ENCODE measurements at regions of chr2 and their contacts with region 1.

Region 1: GRCh38 chr2:85354286-85355072 is at the starts of genes ELMOD3 and RETSAT:
- DNase-seq: peak; percentile 98 to 99 (median 99)
- H3K4me3 ChIP-seq: peak within 1 kb of the TSS; percentile 64 to 81
- H3K4me3 Mint-ChIP-seq: peak within 1 kb of the TSS; percentile 97 to 100 (median 99)
- H3K27ac ChIP-seq: peak within 1 kb of the TSS; percentile 94
- H3K27ac Mint-ChIP-seq: peak within 1 kb of the TSS; percentile 94 to 100 (median 99)
- H3K4me1 ChIP-seq: peaks cover 44% of the 10 kb centered on the region
- H3K4me1 Mint-ChIP-seq: peaks cover 28 to 74% (median 57%) of the 10 kb centered on the region in 4 donors
- H3K27me3 ChIP-seq: no peaks in the 10 kb centered on the region
- H3K27me3 Mint-ChIP-seq: no peaks in the 10 kb centered on the region
- total RNA-seq, gene ELMOD3: 29.8 to 33.2 TPM
- total RNA-seq, gene RETSAT: 33.0 to 33.4 TPM

Region 2: GRCh38 chr2:85213901-85214512 is 140.5 kb before region 1 on chr2:
- CTCF ChIA-PET with region 1: no interaction called
- POLR2A ChIA-PET with region 1: no interaction called
- intact Hi-C with region 1: no loop called
- DNase-seq: no peak
- H3K4me3 ChIP-seq: no peak overlapping the region
- H3K4me3 Mint-ChIP-seq: no peak overlapping the region
- H3K27ac ChIP-seq: no peak overlapping the region
- H3K27ac Mint-ChIP-seq: no peak overlapping the region
- H3K4me1 ChIP-seq: no peaks in the 10 kb centered on the region
- H3K4me1 Mint-ChIP-seq: no peaks in the 10 kb centered on the region
- H3K27me3 ChIP-seq: no peaks in the 10 kb centered on the region
- H3K27me3 Mint-ChIP-seq: peaks cover 17 to 47% of the 10 kb centered on the region in 2 donors

Region 3: DNA sequence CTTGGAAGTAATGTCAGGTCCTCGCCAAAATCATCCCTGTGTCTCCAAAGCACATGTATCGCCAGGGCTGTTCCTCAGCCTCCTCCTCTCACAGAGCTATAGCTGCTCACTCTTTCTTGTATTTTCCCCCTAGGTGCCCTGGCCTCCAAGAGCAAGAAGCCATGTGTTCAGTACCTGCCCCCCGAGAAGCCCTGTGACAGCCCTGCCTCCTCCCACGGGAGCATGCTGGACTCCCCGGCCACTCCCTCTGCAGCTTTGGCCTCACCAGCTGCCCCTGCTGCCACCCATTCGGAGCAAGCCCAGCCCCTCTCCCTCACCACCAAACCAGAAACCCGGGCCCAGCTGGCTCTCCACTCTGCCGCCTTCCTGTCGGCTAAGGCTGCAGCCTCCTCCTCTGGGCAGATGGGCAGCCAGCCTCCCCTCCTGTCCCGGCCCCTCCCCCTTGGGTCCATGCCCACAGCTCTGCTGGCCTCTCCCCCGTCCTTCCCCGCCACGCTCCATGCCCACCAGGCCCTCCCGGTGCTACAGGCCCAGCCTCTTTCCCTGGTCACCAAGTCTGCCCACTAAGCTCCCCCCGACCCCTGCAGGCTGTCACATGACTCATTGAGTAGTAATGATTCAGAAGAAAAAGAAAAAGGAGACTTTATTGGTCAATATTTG is 45.5 kb before region 1 on chr2:
- CTCF ChIA-PET with region 1: no interaction called
- POLR2A ChIA-PET with region 1: interaction called, 16 read pairs
- intact Hi-C with region 1: loop called (anchors 5 kb)
- DNase-seq: peak in 1 of 5 donors; percentile 41
- H3K4me3 ChIP-seq: peak overlapping the region in 1 of 2 donors; percentile 14
- H3K4me3 Mint-ChIP-seq: peak overlapping the region; percentile 80 to 95 (median 87)
- H3K27ac ChIP-seq: peak overlapping the region; percentile 46
- H3K27ac Mint-ChIP-seq: peak overlapping the region; percentile 73 to 97 (median 97)
- H3K4me1 ChIP-seq: peaks cover 36% of the 10 kb centered on the region
- H3K4me1 Mint-ChIP-seq: peaks cover 19 to 48% (median 39%) of the 10 kb centered on the region in 4 donors
- H3K27me3 ChIP-seq: no peaks in the 10 kb centered on the region
- H3K27me3 Mint-ChIP-seq: peaks cover 0 to 2% of the 10 kb centered on the region in 2 donors

Region 4: DNA sequence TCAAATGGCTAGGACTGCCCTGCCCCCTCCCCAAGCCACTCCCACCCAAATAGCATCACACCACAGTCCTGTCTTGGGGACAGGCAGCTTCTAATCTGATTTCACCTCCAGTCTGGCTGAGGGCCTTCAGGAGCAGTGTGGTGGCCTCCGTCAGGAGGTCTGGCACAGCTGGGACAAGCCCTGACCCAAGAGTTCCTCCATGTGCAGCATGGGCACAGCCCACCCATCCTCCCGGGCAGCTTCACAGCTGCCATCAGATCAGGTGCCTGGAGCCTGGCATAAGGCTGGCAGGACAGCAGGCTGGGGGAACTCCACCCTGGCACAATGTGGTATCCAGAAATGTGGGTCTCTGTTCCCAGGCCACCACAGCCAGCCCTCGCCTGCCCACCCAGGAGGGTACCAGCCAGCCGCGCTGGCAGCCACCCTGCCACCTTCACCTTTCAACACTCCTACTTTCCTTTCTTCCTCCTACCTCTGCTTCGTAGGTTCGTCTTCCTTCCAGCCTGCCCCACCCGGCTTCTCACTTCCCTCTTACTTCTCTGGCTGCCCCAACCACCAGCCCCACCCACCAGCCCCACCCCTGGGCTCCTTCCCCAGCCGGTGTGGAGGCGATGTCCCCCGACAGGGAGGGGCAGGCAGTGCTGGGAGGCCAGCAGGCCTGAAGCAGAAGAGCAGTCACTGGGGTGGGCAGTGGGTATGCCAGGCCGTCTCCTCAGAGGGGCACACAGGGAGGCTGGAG is 55.5 kb after region 1 on chr2 and contains the start of gene CAPG:
- CTCF ChIA-PET with region 1: no interaction called
- POLR2A ChIA-PET with region 1: interaction called, 7 read pairs
- intact Hi-C with region 1: loop called (anchors 2 kb)
- DNase-seq: peak in 2 of 5 donors; percentile 25 to 34
- H3K4me3 ChIP-seq: peak within 1 kb of the TSS; percentile 47 to 58
- H3K4me3 Mint-ChIP-seq: peak within 1 kb of the TSS; percentile 86 to 90 (median 88)
- H3K27ac ChIP-seq: peak within 1 kb of the TSS; percentile 55
- H3K27ac Mint-ChIP-seq: peak within 1 kb of the TSS; percentile 54 to 92 (median 85)
- H3K4me1 ChIP-seq: peaks cover 62% of the 10 kb centered on the region
- H3K4me1 Mint-ChIP-seq: peaks cover 36 to 52% (median 44%) of the 10 kb centered on the region in 4 donors
- H3K27me3 ChIP-seq: no peaks in the 10 kb centered on the region
- H3K27me3 Mint-ChIP-seq: no peaks in the 10 kb centered on the region
- total RNA-seq, gene CAPG: 25.6 to 38.5 TPM

Region 5: GRCh38 chr2:85437488-85438284 is 83.2 kb after region 1 on chr2:
- CTCF ChIA-PET with region 1: no interaction called
- POLR2A ChIA-PET with region 1: interaction called, 15 read pairs
- intact Hi-C with region 1: no loop called
- DNase-seq: peak; percentile 77 to 88 (median 81)
- H3K4me3 ChIP-seq: peak overlapping the region; percentile 36 to 52
- H3K4me3 Mint-ChIP-seq: peak overlapping the region; percentile 87 to 95 (median 91)
- H3K27ac ChIP-seq: peak overlapping the region; percentile 75
- H3K27ac Mint-ChIP-seq: peak overlapping the region; percentile 88 to 99 (median 98)
- H3K4me1 ChIP-seq: peaks cover 30% of the 10 kb centered on the region
- H3K4me1 Mint-ChIP-seq: peaks cover 9 to 38% (median 25%) of the 10 kb centered on the region in 4 donors
- H3K27me3 ChIP-seq: no peaks in the 10 kb centered on the region
- H3K27me3 Mint-ChIP-seq: no peaks in the 10 kb centered on the region

Region 6: GRCh38 chr2:85551698-85552678 is 197.5 kb after region 1 on chr2:
- CTCF ChIA-PET with region 1: interaction called, 4 read pairs
- POLR2A ChIA-PET with region 1: interaction called, 4 read pairs
- intact Hi-C with region 1: loop called (anchors 1 kb)
- DNase-seq: peak; percentile 86 to 90 (median 87)
- H3K4me3 ChIP-seq: no peak overlapping the region
- H3K4me3 Mint-ChIP-seq: no peak overlapping the region
- H3K27ac ChIP-seq: no peak overlapping the region
- H3K27ac Mint-ChIP-seq: peak overlapping the region; percentile 22 to 70 (median 47)
- H3K4me1 ChIP-seq: no peaks in the 10 kb centered on the region
- H3K4me1 Mint-ChIP-seq: peaks cover 0 to 7% (median 4%) of the 10 kb centered on the region in 4 donors
- H3K27me3 ChIP-seq: no peaks in the 10 kb centered on the region
- H3K27me3 Mint-ChIP-seq: no peaks in the 10 kb centered on the region

Region 7: DNA sequence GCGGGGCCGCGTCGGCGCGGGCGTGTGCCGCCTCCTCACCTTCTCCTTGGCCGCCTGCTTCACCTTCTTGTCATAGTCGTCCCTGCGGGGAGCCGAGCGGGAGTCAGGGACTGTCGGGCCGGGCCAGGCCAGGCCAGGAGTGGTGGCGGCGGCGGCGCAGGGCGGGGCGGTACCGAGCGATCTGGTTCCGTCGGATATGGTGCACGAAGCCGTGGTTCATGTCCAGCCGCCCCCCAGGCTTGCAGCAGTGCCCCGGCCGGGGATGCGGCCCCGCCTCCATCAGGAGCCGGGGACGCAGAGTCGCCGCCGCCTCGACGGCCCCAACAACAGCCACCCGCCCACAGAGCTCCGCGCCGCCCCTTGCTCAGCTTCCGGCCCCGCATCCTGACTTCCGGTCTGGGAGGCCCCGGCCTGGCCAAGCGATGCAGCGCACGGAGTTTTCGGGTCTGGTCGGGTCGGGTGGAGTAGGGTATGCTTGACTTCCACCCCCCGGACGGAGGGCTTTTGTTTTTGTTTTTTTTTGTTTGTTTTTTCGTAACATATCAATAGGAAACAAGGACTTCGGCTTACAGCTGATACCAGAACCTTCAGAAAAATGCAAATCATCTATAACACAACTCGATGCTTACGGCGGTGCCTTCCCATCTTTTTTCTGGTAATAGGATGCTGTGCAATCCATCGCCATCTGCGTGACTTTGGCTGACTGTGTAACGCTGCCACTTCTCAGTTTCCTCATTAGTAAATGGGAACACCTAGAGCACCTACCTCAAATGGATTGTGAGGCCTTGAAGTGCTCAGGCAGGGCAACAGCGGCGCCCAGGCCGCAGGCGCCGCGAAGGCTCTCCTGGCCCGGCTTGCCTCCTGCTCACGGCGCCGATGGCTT is 257.5 kb after region 1 on chr2 and contains the start of gene C2orf68:
- CTCF ChIA-PET with region 1: no interaction called
- POLR2A ChIA-PET with region 1: interaction called, 6 read pairs
- intact Hi-C with region 1: loop called (anchors 1 kb)
- DNase-seq: peak; percentile 77 to 86 (median 77)
- H3K4me3 ChIP-seq: peak within 1 kb of the TSS; percentile 57 to 86
- H3K4me3 Mint-ChIP-seq: peak within 1 kb of the TSS; percentile 96 to 100 (median 98)
- H3K27ac ChIP-seq: peak within 1 kb of the TSS; percentile 72
- H3K27ac Mint-ChIP-seq: peak within 1 kb of the TSS; percentile 94 to 97 (median 97)
- H3K4me1 ChIP-seq: peaks cover 30% of the 10 kb centered on the region
- H3K4me1 Mint-ChIP-seq: peaks cover 13 to 41% (median 25%) of the 10 kb centered on the region in 4 donors
- H3K27me3 ChIP-seq: no peaks in the 10 kb centered on the region
- H3K27me3 Mint-ChIP-seq: no peaks in the 10 kb centered on the region
- total RNA-seq, gene C2orf68: 87.3 to 89.9 TPM

Measured in CD4-positive, alpha-beta memory T cell (primary cell).